ENCODE measurements at regions of chr7 and their contacts with region 1.

Region 1: DNA sequence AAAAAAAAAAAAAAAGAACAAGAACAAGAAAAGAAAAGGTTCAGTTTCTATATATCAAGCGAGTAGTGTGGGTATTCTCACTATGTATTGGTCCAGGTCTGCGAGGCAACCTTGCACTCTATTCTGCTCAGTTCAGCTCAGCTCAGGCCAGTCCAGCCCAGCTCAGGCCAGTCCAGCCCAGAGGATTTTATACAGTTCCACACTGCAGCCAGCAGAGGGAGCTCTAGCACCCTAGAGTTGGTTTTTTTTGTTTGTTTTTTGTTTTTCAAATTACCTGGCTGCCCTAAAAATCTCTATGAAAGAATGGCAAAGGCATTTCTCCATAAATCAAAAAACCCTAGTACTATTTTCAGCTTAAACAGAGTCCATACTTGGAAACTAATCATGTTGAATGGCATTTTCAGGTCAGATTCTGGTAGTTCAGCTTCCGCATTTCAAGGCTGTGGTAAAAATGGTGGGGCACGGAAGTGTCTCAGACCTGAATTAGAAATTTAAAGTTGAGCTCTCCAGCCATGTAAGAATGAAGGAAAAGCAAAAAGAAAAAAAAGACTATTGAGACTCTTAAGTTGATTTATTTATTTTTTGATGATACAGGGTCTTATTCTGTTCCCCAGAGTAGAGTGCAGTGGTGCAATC is 55.2 kb upstream of the GSDME start:
- DNase-seq: peak; percentile 52 to 75
- H3K4me3 ChIP-seq: no peak overlapping the region
- H3K4me3 Mint-ChIP-seq: no peak overlapping the region
- H3K27ac Mint-ChIP-seq: no peak overlapping the region
- H3K4me1 ChIP-seq: no peaks in the 10 kb centered on the region
- H3K4me1 Mint-ChIP-seq: no peaks in the 10 kb centered on the region
- H3K27me3 ChIP-seq: no peaks in the 10 kb centered on the region
- H3K27me3 Mint-ChIP-seq: no peaks in the 10 kb centered on the region
- CTCF ChIP-seq: peak; percentile 90 to 91

Region 2: DNA sequence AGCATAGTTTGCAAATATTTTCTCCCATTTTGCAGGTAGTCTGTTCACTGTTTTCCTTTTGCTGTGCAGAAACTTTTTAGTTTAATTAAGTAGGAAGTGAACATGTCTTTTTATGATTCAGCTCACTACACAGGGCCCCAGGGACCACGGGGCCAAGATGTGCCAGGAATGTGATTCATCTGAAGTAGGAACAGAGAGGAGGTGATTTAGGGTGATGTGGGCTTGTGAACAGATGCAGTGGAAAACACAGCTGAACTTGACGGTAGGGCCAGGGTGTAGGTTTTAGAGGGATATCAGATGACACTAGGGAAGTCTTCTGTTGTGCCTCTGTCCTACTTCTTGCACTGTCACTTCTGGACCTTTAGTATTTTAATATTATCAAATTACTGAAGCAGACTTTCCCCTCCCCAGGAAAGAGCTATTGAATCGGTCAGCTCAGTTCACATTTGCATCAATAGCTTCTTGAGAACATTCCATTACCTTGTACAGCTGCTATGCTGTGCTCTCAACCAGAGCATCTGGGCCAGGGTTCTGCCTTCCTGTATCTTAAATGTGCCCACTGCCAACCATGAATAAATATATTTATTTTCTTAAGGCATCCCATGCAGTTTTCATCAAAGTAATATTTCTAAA is 70.7 kb after region 1 on chr7:
- CTCF ChIA-PET with region 1: interaction called, 16 read pairs
- POLR2A ChIA-PET with region 1: no interaction called
- intact Hi-C with region 1: no loop called
- DNase-seq: no peak
- H3K4me3 ChIP-seq: no peak overlapping the region
- H3K4me3 Mint-ChIP-seq: no peak overlapping the region
- H3K27ac Mint-ChIP-seq: peak overlapping the region; percentile 54
- H3K4me1 ChIP-seq: no peaks in the 10 kb centered on the region
- H3K4me1 Mint-ChIP-seq: peaks cover 7% of the 10 kb centered on the region
- H3K27me3 ChIP-seq: no peaks in the 10 kb centered on the region
- H3K27me3 Mint-ChIP-seq: no peaks in the 10 kb centered on the region
- CTCF ChIP-seq: no peak

Region 3: GRCh38 chr7:25069900-25070443 is 257.5 kb after region 1 on chr7:
- CTCF ChIA-PET with region 1: interaction called, 34 read pairs
- POLR2A ChIA-PET with region 1: no interaction called
- intact Hi-C with region 1: loop called (anchors 1 kb)
- DNase-seq: peak; percentile 73 to 76
- H3K4me3 ChIP-seq: peak overlapping the region; percentile 20
- H3K4me3 Mint-ChIP-seq: peak overlapping the region; percentile 62
- H3K27ac Mint-ChIP-seq: no peak overlapping the region
- H3K4me1 ChIP-seq: peaks cover 4% of the 10 kb centered on the region; the same call in 1 of the 2 replicates
- H3K4me1 Mint-ChIP-seq: peaks cover 10% of the 10 kb centered on the region
- H3K27me3 ChIP-seq: no peaks in the 10 kb centered on the region
- H3K27me3 Mint-ChIP-seq: no peaks in the 10 kb centered on the region
- CTCF ChIP-seq: peak; percentile 82 to 90

Region 4: GRCh38 chr7:25098096-25099046 is 285.9 kb after region 1 on chr7:
- CTCF ChIA-PET with region 1: interaction called, 78 read pairs
- POLR2A ChIA-PET with region 1: no interaction called
- intact Hi-C with region 1: loop called (anchors 1 kb)
- DNase-seq: peak; percentile 54 to 58
- H3K4me3 ChIP-seq: no peak overlapping the region
- H3K4me3 Mint-ChIP-seq: no peak overlapping the region
- H3K27ac Mint-ChIP-seq: no peak overlapping the region
- H3K4me1 ChIP-seq: 0 out of 2 replicates have a peak, but pooled peaks cover 3% of the 10 kb centered on the region
- H3K4me1 Mint-ChIP-seq: peaks cover 25% of the 10 kb centered on the region
- H3K27me3 ChIP-seq: no peaks in the 10 kb centered on the region
- H3K27me3 Mint-ChIP-seq: peaks cover 3% of the 10 kb centered on the region
- CTCF ChIP-seq: peak; percentile 77 to 90

Measured in Caco-2 (cell line).